Transverse colon (tissue), 4 donors: ENCODE measurements at regions of chr20 and their contacts with region 1.

Region 1: DNA sequence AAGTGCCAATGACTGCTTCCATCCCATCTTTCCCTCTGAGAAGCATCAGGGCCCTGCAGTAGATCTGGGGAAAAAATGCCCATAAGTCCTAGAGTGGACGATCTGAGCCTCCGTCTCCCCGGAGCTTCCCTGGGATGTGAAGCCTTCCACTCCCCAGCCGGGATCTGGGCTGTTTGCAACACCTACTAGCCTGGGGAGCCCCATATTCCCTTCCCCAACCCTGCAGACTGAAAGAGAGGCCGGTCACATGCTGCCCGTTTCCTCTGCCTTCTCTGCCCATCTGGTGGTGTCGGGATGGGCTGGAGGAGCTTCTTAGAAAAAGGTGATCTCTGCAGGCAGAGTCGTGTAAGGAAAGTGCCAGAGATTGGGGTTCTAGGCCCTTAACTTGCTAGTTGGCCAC is 1.1 kb downstream of the SNPH start:
- DNase-seq: no peak
- H3K4me3 ChIP-seq: peak overlapping the region in 3 of 4 donors; percentile 72 to 76 (median 73)
- H3K27ac ChIP-seq: peak overlapping the region in 1 of 4 donors; percentile 54
- H3K4me1 ChIP-seq: peaks cover 0 to 16% (median 14%) of the 10 kb centered on the region in 4 donors
- H3K27me3 ChIP-seq: no peaks in the 10 kb centered on the region
- CTCF ChIP-seq: no peak
- EP300 ChIP-seq: no peak
- POLR2A ChIP-seq: no peak

Region 2: DNA sequence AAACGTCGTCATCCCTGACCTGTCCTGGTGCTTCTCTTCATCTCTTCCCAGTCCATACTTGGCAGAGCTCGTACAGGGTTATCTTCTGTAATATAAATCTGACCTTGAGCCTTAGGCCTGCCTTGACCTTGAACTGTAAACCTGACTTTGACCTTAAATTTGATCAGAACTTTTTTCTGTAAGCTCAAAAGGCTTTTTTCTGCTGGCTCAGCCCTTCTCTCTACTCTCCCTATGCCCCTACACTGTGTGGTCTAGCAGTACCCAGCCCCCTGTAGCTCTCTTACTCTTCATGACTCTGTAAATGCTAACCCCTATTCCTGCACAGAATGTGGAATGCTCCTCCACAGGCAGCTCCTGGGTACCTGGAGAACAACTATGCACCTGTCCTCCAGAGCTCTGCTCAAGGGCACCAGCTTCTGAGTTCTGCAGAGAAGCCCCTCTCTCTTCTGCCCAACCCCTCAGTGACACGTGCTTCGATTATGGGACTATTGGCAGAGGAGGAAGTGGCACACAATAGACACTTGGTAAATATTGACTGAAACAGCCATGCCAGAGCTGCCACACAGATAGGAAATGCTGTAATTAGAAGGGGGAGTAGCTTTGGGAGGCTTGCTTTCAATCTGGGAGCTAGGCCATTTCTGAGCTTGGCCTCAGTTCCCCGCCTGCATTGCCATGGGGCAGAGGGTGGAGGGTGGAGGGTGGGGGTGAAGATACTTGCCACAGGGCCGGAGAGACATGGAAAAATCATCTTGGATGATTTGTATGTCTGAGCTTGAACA is 14.3 kb after region 1 on chr20:
- in situ Hi-C with region 1: no loop called
- intact Hi-C with region 1: loop called (anchors 1 kb)
- DNase-seq: no peak
- H3K4me3 ChIP-seq: no peak overlapping the region
- H3K27ac ChIP-seq: no peak overlapping the region
- H3K4me1 ChIP-seq: peaks cover 0 to 11% (median 5%) of the 10 kb centered on the region in 4 donors
- H3K27me3 ChIP-seq: no peaks in the 10 kb centered on the region
- CTCF ChIP-seq: no peak
- EP300 ChIP-seq: no peak
- POLR2A ChIP-seq: no peak

Region 3: GRCh38 chr20:1299522-1299921 is 32.4 kb after region 1 on chr20:
- in situ Hi-C with region 1: no loop called
- intact Hi-C with region 1: no loop called
- DNase-seq: no peak
- H3K4me3 ChIP-seq: no peak overlapping the region
- H3K27ac ChIP-seq: no peak overlapping the region
- H3K4me1 ChIP-seq: no peaks in the 10 kb centered on the region
- H3K27me3 ChIP-seq: no peaks in the 10 kb centered on the region
- CTCF ChIP-seq: peak in 2 of 5 experiments; percentile 17 to 36
- EP300 ChIP-seq: no peak
- POLR2A ChIP-seq: no peak